ENCODE measurements at regions of chr13 and their contacts with region 1.

Region 1: GRCh38 chr13:23630349-23631093 is 60.3 kb downstream of the TNFRSF19 start:
- DNase-seq: peak; percentile 72 to 76
- H3K4me3 ChIP-seq: no peak overlapping the region
- H3K4me3 Mint-ChIP-seq: peak overlapping the region; percentile 52
- H3K27ac Mint-ChIP-seq: peak overlapping the region; percentile 87
- H3K4me1 ChIP-seq: peaks cover 76% of the 10 kb centered on the region
- H3K4me1 Mint-ChIP-seq: peaks cover 47% of the 10 kb centered on the region
- H3K27me3 ChIP-seq: no peaks in the 10 kb centered on the region
- H3K27me3 Mint-ChIP-seq: no peaks in the 10 kb centered on the region
- CTCF ChIP-seq: no peak

Region 2: GRCh38 chr13:23588642-23589041 is 41.9 kb before region 1 on chr13:
- CTCF ChIA-PET with region 1: no interaction called
- POLR2A ChIA-PET with region 1: no interaction called
- intact Hi-C with region 1: no loop called
- DNase-seq: no peak
- H3K4me3 ChIP-seq: no peak overlapping the region
- H3K4me3 Mint-ChIP-seq: peak overlapping the region; percentile 1
- H3K27ac Mint-ChIP-seq: peak overlapping the region; percentile 57
- H3K4me1 ChIP-seq: peaks cover 16% of the 10 kb centered on the region
- H3K4me1 Mint-ChIP-seq: peaks cover 23% of the 10 kb centered on the region
- H3K27me3 ChIP-seq: no peaks in the 10 kb centered on the region
- H3K27me3 Mint-ChIP-seq: no peaks in the 10 kb centered on the region
- CTCF ChIP-seq: no peak

Region 3: DNA sequence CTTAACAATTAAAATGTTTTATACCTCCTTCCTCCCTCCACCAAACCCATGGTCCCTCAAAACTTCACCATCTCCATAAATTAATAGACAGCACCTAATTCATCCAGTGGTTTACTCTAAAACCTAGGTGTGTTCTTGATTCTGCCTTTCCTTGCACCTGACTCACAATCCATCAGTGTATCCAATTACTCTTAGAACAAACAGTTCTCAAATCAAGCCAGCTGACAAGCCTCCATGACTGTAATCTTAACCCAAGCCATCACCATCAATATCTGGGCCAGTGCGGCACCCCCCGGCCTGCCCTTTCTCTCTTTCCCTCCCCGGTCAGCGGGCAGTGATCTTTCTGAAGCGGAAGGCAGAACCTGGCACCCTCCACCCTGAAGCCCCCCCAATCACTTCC is 15.3 kb after region 1 on chr13:
- CTCF ChIA-PET with region 1: no interaction called
- POLR2A ChIA-PET with region 1: no interaction called
- intact Hi-C with region 1: no loop called
- DNase-seq: no peak
- H3K4me3 ChIP-seq: no peak overlapping the region
- H3K4me3 Mint-ChIP-seq: no peak overlapping the region
- H3K27ac Mint-ChIP-seq: no peak overlapping the region
- H3K4me1 ChIP-seq: no peaks in the 10 kb centered on the region
- H3K4me1 Mint-ChIP-seq: peaks cover 8% of the 10 kb centered on the region
- H3K27me3 ChIP-seq: no peaks in the 10 kb centered on the region
- H3K27me3 Mint-ChIP-seq: no peaks in the 10 kb centered on the region
- CTCF ChIP-seq: no peak

Region 4: DNA sequence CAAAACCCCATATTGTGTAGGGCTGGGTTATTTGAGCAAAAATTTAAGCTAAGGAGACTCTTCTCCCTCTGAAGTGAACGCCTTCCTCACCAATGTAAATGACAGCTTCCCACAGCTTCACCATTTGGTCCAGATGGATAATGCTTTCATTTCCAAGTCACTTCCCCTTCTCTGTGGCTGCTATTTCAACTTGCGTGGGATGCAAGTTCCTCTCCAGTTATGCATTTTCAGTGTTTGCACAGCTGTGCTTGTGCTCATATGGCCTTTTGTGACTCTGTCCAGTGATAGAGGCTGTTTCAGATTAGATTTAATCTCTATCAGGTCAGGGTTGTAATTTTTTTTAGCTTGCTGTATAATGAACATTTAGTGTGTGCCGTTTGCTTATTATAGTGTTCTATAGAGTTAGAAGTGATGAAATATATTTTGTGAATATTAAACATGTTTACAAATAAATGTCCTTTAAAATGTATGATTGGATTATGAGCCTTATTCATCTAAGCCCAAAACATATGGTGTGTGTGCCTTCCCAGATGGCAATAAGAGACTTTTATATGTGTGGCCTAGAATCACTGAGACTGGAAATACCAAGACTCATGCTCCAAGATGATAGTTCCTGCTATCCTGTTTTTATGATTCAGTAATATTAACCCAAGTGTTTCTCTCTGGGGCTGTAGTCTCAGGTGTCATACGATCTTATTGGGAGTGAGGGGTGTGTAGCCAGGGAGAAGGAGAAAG is 26.3 kb after region 1 on chr13:
- CTCF ChIA-PET with region 1: no interaction called
- POLR2A ChIA-PET with region 1: no interaction called
- intact Hi-C with region 1: loop called (anchors 1 kb)
- DNase-seq: peak; percentile 50 to 67
- H3K4me3 ChIP-seq: no peak overlapping the region
- H3K4me3 Mint-ChIP-seq: peak overlapping the region; percentile 12
- H3K27ac Mint-ChIP-seq: peak overlapping the region; percentile 67
- H3K4me1 ChIP-seq: peaks cover 49% of the 10 kb centered on the region
- H3K4me1 Mint-ChIP-seq: peaks cover 38% of the 10 kb centered on the region
- H3K27me3 ChIP-seq: no peaks in the 10 kb centered on the region
- H3K27me3 Mint-ChIP-seq: no peaks in the 10 kb centered on the region
- CTCF ChIP-seq: no peak

Region 5: GRCh38 chr13:23842406-23842805 is 211.9 kb after region 1 on chr13:
- CTCF ChIA-PET with region 1: no interaction called
- POLR2A ChIA-PET with region 1: no interaction called
- intact Hi-C with region 1: no loop called
- DNase-seq: no peak
- H3K4me3 ChIP-seq: no peak overlapping the region
- H3K4me3 Mint-ChIP-seq: no peak overlapping the region
- H3K27ac Mint-ChIP-seq: no peak overlapping the region
- H3K4me1 ChIP-seq: 0 out of 2 replicates have a peak, but pooled peaks cover 6% of the 10 kb centered on the region
- H3K4me1 Mint-ChIP-seq: peaks cover 13% of the 10 kb centered on the region
- H3K27me3 ChIP-seq: no peaks in the 10 kb centered on the region
- H3K27me3 Mint-ChIP-seq: no peaks in the 10 kb centered on the region
- CTCF ChIP-seq: no peak

Region 6: DNA sequence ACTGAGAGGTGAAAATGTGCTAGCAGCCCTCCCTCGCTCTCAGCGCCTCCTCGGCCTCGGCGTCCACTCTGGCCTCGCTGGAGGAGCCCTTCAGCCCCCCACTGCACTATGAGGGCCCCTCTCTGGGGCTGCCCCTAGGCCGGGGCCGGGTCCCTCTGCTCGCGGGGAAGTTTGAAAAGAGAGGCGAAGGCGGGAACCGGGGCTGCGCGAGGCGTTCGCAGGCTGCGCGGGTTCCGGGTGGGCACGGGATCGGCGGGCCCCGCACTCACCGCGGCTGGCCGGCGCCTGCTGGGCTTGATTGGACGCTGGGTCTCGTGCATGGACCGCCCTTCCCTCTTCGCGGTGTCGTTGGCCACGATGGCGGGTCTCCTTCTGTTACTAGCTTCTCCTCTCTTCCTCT is 708.2 kb after region 1 on chr13:
- CTCF ChIA-PET with region 1: no interaction called
- POLR2A ChIA-PET with region 1: no interaction called
- intact Hi-C with region 1: no loop called
- DNase-seq: no peak
- H3K4me3 ChIP-seq: no peak overlapping the region
- H3K4me3 Mint-ChIP-seq: no peak overlapping the region
- H3K27ac Mint-ChIP-seq: no peak overlapping the region
- H3K4me1 ChIP-seq: no peaks in the 10 kb centered on the region
- H3K4me1 Mint-ChIP-seq: no peaks in the 10 kb centered on the region
- H3K27me3 ChIP-seq: no peaks in the 10 kb centered on the region
- H3K27me3 Mint-ChIP-seq: peaks cover 12% of the 10 kb centered on the region
- CTCF ChIP-seq: no peak

Measured in Caco-2 (cell line).